ENCODE measurements at regions of chr17 and their contacts with region 1.

Region 1: GRCh38 chr17:39244600-39245570 is 19.1 kb upstream of the STAC2 start:
- DNase-seq: peak; percentile 89 to 90
- H3K4me3 ChIP-seq: no peak overlapping the region
- H3K27ac ChIP-seq: no peak overlapping the region
- H3K4me1 ChIP-seq: peaks cover 0 to 11% (median 0%) of the 10 kb centered on the region in 4 donors
- H3K27me3 ChIP-seq: peaks cover 0 to 2% of the 10 kb centered on the region in 2 donors
- CTCF ChIP-seq: peak; percentile 91 to 93

Region 2: DNA sequence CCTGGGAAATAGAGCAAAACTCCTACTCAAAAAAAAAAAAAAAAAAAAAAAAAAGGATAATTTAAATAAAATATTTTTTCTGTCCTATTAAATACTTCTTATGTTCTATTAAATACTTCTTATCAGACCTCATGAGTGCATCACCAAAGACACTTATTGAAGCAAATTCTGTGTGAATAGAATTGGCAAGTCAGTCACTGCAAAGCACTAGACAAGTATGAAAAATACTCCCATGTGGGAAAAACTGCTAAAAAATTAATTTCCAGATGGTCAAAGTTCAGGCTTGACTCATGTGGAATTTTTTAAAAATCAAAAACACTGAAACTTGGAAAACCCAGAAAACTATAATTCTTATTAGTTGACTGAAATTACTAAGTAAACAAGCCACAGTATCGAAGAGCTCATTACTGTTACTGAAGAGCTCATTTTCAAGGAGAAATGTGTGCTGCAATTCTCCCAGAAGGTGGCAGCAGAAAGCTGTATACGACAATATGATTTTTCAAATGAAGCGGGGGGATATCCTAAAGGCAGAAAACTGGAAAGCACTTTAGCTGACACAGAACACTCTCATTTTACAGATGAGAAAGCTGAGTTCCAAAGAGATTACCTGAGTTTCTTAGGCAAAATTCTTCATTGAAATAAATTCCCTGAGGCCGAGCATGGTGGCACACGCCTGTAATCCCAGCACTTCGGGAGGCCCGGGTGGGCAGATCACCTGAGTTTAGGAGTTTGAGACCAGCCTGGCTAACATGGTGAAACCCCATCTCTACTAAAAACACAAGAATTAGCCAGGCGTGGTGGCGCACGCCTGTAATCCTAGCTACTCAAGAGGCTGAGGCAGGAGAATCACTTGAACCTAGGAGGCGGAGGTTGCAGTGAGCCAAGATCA is 261.8 kb before region 1 on chr17:
- intact Hi-C with region 1: loop called (anchors 10 kb)
- DNase-seq: peak in 1 of 2 donors; percentile 53
- H3K4me3 ChIP-seq: no peak overlapping the region
- H3K27ac ChIP-seq: peak overlapping the region in 1 of 2 donors; percentile 67
- H3K4me1 ChIP-seq: peaks cover 0 to 30% (median 6%) of the 10 kb centered on the region in 4 donors
- H3K27me3 ChIP-seq: no peaks in the 10 kb centered on the region
- CTCF ChIP-seq: peak; percentile 71 to 80

Region 3: DNA sequence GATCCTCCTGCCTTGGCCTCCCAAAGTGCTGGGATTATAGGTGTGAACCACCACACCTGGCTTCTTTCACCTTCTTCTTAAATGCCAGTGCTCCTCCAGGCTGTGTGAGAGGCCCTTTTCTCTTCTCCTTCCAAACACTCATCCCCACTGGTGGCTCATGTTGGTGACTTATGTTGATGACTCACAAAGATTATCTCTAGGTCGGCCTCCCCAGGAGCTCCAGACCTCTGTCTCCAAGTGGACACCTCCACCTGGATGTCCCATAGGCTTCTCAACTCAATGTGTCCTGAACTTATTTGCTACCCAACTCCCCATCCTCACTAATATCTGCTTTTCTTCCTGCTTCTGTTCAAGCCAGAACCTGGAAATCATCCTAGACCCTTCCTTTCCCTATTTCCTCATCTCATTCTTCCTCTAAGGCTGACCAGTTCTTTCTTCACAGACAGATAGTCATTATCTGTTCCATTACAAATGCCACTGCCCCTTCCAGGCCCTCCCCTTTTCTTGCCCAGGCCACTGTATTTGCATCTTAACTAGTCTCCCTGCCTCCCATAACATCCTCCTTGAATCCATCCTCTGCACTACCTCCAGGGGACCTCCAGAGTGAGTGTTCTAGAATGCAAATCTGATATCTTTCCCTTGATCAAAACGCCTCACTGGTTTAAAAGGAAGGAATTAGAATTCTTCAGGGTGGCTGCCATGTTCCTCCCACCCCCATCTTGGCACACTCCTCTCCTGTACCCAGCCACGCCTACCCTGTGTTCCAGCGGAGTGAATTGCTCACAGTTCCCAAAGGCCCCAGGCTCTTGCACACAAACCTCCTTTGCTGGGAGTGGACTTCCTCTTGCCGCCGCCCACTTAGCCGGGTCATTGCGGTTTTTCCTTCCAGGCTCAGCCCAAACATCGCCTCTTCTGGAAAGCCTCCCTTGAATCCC is 242.9 kb before region 1 on chr17:
- intact Hi-C with region 1: no loop called
- DNase-seq: peak; percentile 88 to 90
- H3K4me3 ChIP-seq: peak overlapping the region in 1 of 2 donors; percentile 5
- H3K27ac ChIP-seq: peak overlapping the region; percentile 46 to 56
- H3K4me1 ChIP-seq: peaks cover 0 to 27% (median 11%) of the 10 kb centered on the region in 4 donors
- H3K27me3 ChIP-seq: no peaks in the 10 kb centered on the region
- CTCF ChIP-seq: no peak

Region 4: GRCh38 chr17:39209317-39210092 is 35.4 kb before region 1 on chr17:
- intact Hi-C with region 1: loop called (anchors 5 kb)
- DNase-seq: peak; percentile 91 to 96
- H3K4me3 ChIP-seq: peak overlapping the region; percentile 41 to 50
- H3K27ac ChIP-seq: peak overlapping the region; percentile 80 to 93
- H3K4me1 ChIP-seq: peaks cover 0 to 74% (median 61%) of the 10 kb centered on the region in 4 donors
- H3K27me3 ChIP-seq: no peaks in the 10 kb centered on the region
- CTCF ChIP-seq: no peak

Region 5: DNA sequence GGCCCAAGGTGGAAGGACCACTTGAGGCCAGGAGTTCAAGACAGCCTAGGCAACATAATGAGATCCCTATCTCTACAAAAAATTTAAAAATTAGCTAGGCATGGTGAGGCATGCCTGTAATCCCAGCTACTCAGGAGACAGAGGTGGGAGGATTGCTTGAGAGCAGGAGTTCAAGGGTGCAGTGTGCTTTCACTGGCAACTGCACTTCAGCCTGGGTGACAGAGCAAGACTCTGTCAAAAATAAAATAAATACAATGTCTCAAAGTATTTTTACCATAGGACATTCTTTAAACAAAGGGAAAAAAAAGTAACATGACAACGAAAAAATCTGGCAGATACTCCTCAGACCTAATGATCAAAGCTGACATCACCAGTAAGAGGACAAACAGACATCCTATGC is 83.9 kb after region 1 on chr17:
- intact Hi-C with region 1: no loop called
- DNase-seq: no peak
- H3K4me3 ChIP-seq: no peak overlapping the region
- H3K27ac ChIP-seq: no peak overlapping the region
- H3K4me1 ChIP-seq: peaks cover 0 to 7% (median 0%) of the 10 kb centered on the region in 4 donors
- H3K27me3 ChIP-seq: no peaks in the 10 kb centered on the region
- CTCF ChIP-seq: no peak